Activated CD8-positive, alpha-beta T cell treated with anti-CD3 and anti-CD28 coated beads for 36 hours (primary cell): ENCODE measurements at regions of chr6 and their contacts with region 1.

Region 1: DNA sequence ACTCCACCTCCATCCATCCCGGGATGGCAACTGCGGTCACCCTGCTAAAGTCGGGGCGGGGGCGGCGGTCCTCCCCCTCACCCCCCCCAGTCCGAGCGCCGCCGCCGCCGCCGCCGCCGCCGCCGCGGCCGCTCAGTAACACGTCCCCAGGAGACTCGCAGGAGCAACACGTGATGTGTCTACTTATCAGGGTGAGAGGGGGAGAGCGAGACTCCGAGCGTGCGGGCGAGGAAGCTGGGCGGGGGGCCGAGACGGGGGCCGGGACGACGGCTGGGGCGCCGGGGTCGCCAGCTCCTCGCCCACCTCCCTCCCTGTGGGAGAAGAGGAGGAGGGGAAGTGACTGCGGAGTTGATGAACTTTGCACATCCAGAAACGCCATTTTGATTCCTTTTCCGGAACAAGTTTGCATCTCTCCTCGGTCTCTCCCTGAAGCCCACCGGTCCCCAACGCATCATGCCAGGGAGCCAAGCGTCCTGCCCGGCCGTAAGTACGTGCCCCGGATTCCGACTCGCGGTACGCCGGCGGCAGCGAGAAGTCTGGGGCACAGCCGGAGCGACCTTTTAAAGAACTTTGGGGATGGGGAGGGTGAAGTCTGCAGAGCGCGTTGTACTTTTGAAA is at the start of gene RREB1:
- DNase-seq: peak; percentile 74
- ATAC-seq: peak; percentile 56
- H3K4me3 Mint-ChIP-seq: peak within 1 kb of the TSS; percentile 83
- H3K27ac Mint-ChIP-seq: peak within 1 kb of the TSS; percentile 97
- H3K4me1 Mint-ChIP-seq: peaks cover 35% of the 10 kb centered on the region
- H3K27me3 Mint-ChIP-seq: no peaks in the 10 kb centered on the region
- CTCF ChIP-seq: no peak
- total RNA-seq, gene RREB1: 18.7 to 19.7 TPM

Region 2: GRCh38 chr6:7086488-7086887 is 21.2 kb before region 1 on chr6:
- CTCF ChIA-PET with region 1: interaction called, 8 read pairs
- POLR2A ChIA-PET with region 1: interaction called, 13 read pairs
- intact Hi-C with region 1: no loop called
- DNase-seq: peak; percentile 69
- ATAC-seq: peak; percentile 62
- H3K4me3 Mint-ChIP-seq: peak overlapping the region; percentile 68
- H3K27ac Mint-ChIP-seq: peak overlapping the region; percentile 83
- H3K4me1 Mint-ChIP-seq: peaks cover 32% of the 10 kb centered on the region
- H3K27me3 Mint-ChIP-seq: no peaks in the 10 kb centered on the region
- CTCF ChIP-seq: no peak

Region 3: GRCh38 chr6:7140631-7141378 is 33.1 kb after region 1 on chr6:
- CTCF ChIA-PET with region 1: interaction called, 4 read pairs
- POLR2A ChIA-PET with region 1: interaction called, 17 read pairs
- intact Hi-C with region 1: loop called (anchors 2 kb)
- DNase-seq: peak; percentile 87
- ATAC-seq: peak; percentile 84
- H3K4me3 Mint-ChIP-seq: peak overlapping the region; percentile 76
- H3K27ac Mint-ChIP-seq: peak overlapping the region; percentile 87
- H3K4me1 Mint-ChIP-seq: peaks cover 80% of the 10 kb centered on the region
- H3K27me3 Mint-ChIP-seq: no peaks in the 10 kb centered on the region
- CTCF ChIP-seq: no peak